Calu3 (cell line): ENCODE measurements at regions of chr12 and their contacts with region 1.

Region 1: DNA sequence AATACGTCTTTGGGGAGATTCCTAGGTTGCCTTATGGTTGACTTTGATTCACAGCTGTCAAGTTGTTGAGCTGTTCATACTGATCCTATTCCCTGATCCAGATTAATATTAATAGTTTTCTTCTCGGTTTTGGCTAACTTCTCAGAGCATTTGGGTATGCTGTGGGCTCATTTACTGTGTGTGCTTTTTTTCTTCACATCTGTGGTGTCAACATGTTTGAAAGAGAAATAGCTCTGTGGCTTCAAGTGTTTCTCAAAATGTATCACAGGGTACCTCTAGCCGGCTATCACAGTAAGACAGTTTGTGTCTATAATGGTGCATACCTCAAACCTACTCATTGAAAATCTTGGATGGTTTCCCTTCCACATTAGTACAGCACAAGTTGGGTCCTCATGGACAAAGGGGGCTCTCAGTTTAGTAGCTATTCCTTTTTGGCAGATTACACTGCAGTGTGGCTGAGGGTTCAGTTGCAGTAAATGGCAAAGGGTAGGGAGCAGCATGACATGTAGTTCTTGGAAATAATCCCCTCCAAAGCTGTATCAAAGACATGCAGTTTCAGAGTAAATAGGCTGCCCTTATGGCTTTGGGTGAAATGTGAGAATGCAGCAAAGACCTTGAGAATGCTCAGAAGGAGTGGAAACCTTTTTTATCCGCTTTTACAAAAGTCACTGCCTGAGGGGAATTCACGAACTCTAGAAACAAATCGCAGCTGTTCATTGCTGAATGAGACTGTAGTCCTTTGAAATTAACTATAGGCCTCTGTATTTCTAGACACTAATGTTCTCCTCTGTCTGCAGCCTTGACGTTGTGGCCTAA is 102.4 kb upstream of the ATF1 start:
- DNase-seq: no peak
- H3K4me3 Mint-ChIP-seq: no peak overlapping the region
- H3K27ac Mint-ChIP-seq: no peak overlapping the region
- H3K4me1 Mint-ChIP-seq: peaks cover 8% of the 10 kb centered on the region
- H3K27me3 Mint-ChIP-seq: no peaks in the 10 kb centered on the region
- CTCF ChIP-seq: no peak

Region 2: GRCh38 chr12:50637870-50638481 is 23.5 kb before region 1 on chr12:
- CTCF ChIA-PET with region 1: interaction called, 4 read pairs
- intact Hi-C with region 1: loop called (anchors 2 kb)
- DNase-seq: no peak
- H3K4me3 Mint-ChIP-seq: no peak overlapping the region
- H3K27ac Mint-ChIP-seq: no peak overlapping the region
- H3K4me1 Mint-ChIP-seq: peaks cover 28% of the 10 kb centered on the region
- H3K27me3 Mint-ChIP-seq: no peaks in the 10 kb centered on the region
- CTCF ChIP-seq: peak; percentile 17